Gastrocnemius medialis (tissue), 4 donors: ENCODE measurements at regions of chr7 and their contacts with region 1.

Region 1: DNA sequence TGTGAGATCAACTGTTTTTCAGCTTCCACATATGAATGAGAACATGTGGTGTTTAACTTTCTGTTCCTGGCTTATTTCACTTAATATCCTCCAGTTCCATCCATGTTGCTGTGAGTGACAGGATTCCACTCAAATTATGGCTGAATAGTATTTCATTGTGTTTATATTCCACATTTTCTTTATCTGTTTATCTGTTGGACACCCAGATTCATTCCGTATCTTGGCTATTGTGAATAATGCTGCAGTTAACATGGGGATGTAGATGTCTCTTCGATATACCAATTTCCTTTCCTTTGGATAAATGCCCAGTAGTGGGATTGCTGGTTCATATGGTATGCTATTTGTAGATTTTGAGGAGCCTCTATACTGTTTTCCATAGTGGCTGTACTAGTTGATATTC is 47.9 kb downstream of the GALNT11 start:
- DNase-seq: no peak
- ATAC-seq: no peak
- H3K4me3 ChIP-seq: no peak overlapping the region
- H3K27ac ChIP-seq: no peak overlapping the region
- H3K4me1 ChIP-seq: peaks cover 18 to 23% of the 10 kb centered on the region in 2 donors
- H3K27me3 ChIP-seq: no peaks in the 10 kb centered on the region
- CTCF ChIP-seq: no peak
- POLR2A ChIP-seq: no peak

Region 2: DNA sequence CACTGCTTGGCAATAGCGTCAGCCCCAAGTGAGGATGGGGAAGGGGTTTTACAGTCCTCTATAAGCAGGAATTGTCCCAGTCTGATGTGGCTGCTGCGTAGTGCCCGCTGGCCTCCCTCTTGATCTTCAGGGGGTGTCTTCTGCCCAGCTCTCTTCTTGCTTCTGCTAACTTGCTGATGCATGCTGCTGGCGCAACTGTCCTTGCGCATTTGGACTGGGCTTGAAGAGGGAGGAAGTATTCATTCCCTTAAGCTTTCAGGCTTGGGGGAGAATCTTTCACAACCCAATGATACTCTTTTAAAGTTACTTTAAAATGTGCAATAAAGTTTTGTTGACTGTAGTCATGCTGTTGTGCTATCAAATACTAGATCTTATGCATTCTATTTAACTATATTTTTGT is 37.5 kb before region 1 on chr7:
- in situ Hi-C with region 1: no loop called
- intact Hi-C with region 1: loop called (anchors 1 kb)
- DNase-seq: no peak
- ATAC-seq: no peak
- H3K4me3 ChIP-seq: no peak overlapping the region
- H3K27ac ChIP-seq: no peak overlapping the region
- H3K4me1 ChIP-seq: peaks cover 0 to 2% of the 10 kb centered on the region in 2 donors
- H3K27me3 ChIP-seq: no peaks in the 10 kb centered on the region
- CTCF ChIP-seq: no peak
- POLR2A ChIP-seq: no peak

Region 3: GRCh38 chr7:152115021-152115733 is 41.8 kb after region 1 on chr7:
- in situ Hi-C with region 1: no loop called
- intact Hi-C with region 1: no loop called
- DNase-seq: no peak
- ATAC-seq: no peak
- H3K4me3 ChIP-seq: no peak overlapping the region
- H3K27ac ChIP-seq: no peak overlapping the region
- H3K4me1 ChIP-seq: no peaks in the 10 kb centered on the region
- H3K27me3 ChIP-seq: no peaks in the 10 kb centered on the region
- CTCF ChIP-seq: no peak
- POLR2A ChIP-seq: no peak